ENCODE measurements at regions of chr5 and their contacts with region 1.

Region 1: GRCh38 chr5:95730730-95731570 is at the start of gene RHOBTB3:
- DNase-seq: peak; percentile 28
- H3K4me3 Mint-ChIP-seq: peak within 1 kb of the TSS; percentile 75
- H3K27ac Mint-ChIP-seq: no peak within 1 kb of the TSS
- H3K4me1 Mint-ChIP-seq: peaks cover 39% of the 10 kb centered on the region
- H3K27me3 Mint-ChIP-seq: peaks cover 37% of the 10 kb centered on the region
- total RNA-seq, gene RHOBTB3: 1.5 to 2.4 TPM

Region 2: GRCh38 chr5:95712347-95712958 is 18.5 kb before region 1 on chr5:
- CTCF ChIA-PET with region 1: no interaction called
- intact Hi-C with region 1: loop called (anchors 2 kb)
- DNase-seq: peak; percentile 78
- H3K4me3 Mint-ChIP-seq: no peak overlapping the region
- H3K27ac Mint-ChIP-seq: no peak overlapping the region
- H3K4me1 Mint-ChIP-seq: peaks cover 30% of the 10 kb centered on the region
- H3K27me3 Mint-ChIP-seq: peaks cover 6% of the 10 kb centered on the region

Region 3: GRCh38 chr5:95746722-95747679 is 16.1 kb after region 1 on chr5:
- CTCF ChIA-PET with region 1: no interaction called
- intact Hi-C with region 1: loop called (anchors 2 kb)
- DNase-seq: no peak
- H3K4me3 Mint-ChIP-seq: no peak overlapping the region
- H3K27ac Mint-ChIP-seq: no peak overlapping the region
- H3K4me1 Mint-ChIP-seq: peaks cover 8% of the 10 kb centered on the region
- H3K27me3 Mint-ChIP-seq: no peaks in the 10 kb centered on the region